ENCODE measurements at regions of chr12 and their contacts with region 1.

Region 1: GRCh38 chr12:8890313-8891085 is 23.8 kb upstream of the PHC1 start:
- DNase-seq: peak; percentile 64
- H3K4me3 ChIP-seq: peak overlapping the region; percentile 63
- H3K27ac ChIP-seq: no peak overlapping the region
- H3K4me1 ChIP-seq: no peaks in the 10 kb centered on the region
- CTCF ChIP-seq: peak; percentile 99

Region 2: DNA sequence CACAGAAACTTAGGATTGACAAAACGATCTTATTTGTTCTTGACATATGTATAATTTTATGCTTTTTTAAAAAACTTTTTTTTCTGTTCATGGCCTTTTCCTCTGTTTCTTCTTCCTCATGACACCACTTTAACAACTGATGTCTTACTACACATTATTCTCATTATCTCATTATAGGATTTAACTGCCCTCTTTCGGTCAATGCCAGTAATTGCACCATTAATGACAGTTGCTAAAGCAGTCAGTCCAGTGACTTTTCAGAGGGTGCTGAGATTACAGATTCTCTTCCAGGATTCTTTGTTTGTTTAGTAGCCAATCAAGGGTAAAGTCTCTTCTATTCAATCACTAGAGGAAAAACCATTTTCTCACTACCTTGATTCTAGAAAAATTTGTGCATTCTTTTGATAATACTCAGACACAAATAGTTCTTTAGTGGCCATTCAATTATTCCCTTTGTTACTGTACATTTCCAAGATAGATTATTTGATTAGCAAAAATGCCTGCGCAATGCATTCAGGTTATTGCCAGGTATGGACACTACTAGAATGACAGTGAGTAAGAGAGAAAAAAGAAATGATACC is 149.0 kb after region 1 on chr12:
- CTCF ChIA-PET with region 1: interaction called, 3 read pairs
- POLR2A ChIA-PET with region 1: interaction called, 3 read pairs
- intact Hi-C with region 1: loop called (anchors 2 kb)
- DNase-seq: peak; percentile 68
- H3K4me3 ChIP-seq: no peak overlapping the region
- H3K27ac ChIP-seq: no peak overlapping the region
- H3K4me1 ChIP-seq: no peaks in the 10 kb centered on the region
- CTCF ChIP-seq: peak; percentile 96